Spleen (tissue), 13 donors: ENCODE measurements at regions of chr3 and their contacts with region 1.

Region 1: DNA sequence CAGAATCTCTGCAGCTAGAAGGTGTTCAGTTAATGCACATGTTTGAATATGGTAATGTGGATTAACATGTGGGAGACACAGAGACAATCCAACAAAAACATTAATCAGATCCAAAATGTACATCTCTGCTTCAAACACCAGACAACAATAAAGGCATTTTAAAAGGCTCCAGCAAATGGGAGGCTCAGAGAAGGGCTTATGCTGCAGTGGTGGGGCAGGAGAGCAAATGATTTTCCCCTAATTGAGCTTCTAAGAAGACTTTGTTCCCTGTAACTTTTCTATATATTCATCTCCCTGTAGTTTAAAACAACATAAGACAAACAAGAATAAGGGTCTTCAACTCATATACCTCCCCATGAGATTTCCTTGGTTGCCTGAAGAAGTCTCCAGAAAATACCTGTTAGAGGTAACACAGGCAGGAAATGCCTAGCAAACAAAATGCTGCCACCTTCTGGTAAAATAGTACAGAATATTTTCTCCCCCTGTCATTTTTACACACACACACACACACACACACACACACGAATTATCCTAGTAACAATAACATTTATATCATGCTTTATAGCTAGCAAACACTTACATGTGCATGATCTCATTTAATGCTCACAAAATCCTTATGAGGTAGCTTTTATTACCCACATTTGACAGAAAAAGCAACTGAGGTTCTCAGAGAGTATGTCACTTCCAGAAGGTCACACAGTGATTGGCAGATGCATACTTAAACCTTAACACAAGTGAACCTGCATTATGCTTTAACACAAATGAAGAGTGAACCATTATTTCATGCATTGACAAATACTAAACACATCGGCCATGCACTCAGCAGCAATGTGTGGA is 123.4 kb upstream of the MB21D2 start:
- DNase-seq: no peak
- H3K4me3 ChIP-seq: no peak overlapping the region
- H3K27ac ChIP-seq: no peak overlapping the region
- H3K4me1 ChIP-seq: no peaks in the 10 kb centered on the region
- H3K27me3 ChIP-seq: no peaks in the 10 kb centered on the region
- CTCF ChIP-seq: peak in 6 of 11 experiments; percentile 24 to 69 (median 40)
- POLR2A ChIP-seq: no peak

Region 2: GRCh38 chr3:192737506-192737905 is 303.5 kb before region 1 on chr3:
- intact Hi-C with region 1: no loop called
- DNase-seq: no peak
- H3K4me3 ChIP-seq: no peak overlapping the region
- H3K27ac ChIP-seq: no peak overlapping the region
- H3K4me1 ChIP-seq: no peaks in the 10 kb centered on the region
- H3K27me3 ChIP-seq: no peaks in the 10 kb centered on the region
- CTCF ChIP-seq: no peak
- POLR2A ChIP-seq: no peak

Region 3: GRCh38 chr3:192816351-192816750 is 224.7 kb before region 1 on chr3:
- intact Hi-C with region 1: loop called (anchors 2 kb)
- DNase-seq: no peak
- H3K4me3 ChIP-seq: no peak overlapping the region
- H3K27ac ChIP-seq: no peak overlapping the region
- H3K4me1 ChIP-seq: no peaks in the 10 kb centered on the region
- H3K27me3 ChIP-seq: no peaks in the 10 kb centered on the region
- CTCF ChIP-seq: peak in 9 of 11 experiments; percentile 18 to 65 (median 54)
- POLR2A ChIP-seq: no peak

Region 4: DNA sequence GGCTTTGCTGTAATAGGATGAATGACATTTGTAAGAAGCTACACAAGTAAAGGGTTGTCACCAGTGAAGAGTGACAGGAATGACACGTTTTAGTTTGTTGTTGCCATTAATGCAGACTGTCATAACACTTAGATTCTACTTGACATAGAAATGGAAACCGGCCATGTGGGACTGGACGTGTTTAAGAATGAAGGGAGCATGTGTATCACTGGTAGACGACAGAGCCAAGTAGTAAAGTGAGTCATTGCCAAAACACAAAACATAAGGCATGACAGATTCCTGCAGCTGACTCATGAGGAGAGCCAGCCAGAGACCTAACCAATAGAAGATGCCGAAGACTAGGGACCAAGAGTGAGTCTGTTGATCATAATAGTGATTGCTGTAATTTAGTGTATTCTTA is 93.8 kb after region 1 on chr3:
- intact Hi-C with region 1: no loop called
- DNase-seq: no peak
- H3K4me3 ChIP-seq: no peak overlapping the region
- H3K27ac ChIP-seq: no peak overlapping the region
- H3K4me1 ChIP-seq: no peaks in the 10 kb centered on the region
- H3K27me3 ChIP-seq: no peaks in the 10 kb centered on the region
- CTCF ChIP-seq: no peak
- POLR2A ChIP-seq: no peak

Region 5: DNA sequence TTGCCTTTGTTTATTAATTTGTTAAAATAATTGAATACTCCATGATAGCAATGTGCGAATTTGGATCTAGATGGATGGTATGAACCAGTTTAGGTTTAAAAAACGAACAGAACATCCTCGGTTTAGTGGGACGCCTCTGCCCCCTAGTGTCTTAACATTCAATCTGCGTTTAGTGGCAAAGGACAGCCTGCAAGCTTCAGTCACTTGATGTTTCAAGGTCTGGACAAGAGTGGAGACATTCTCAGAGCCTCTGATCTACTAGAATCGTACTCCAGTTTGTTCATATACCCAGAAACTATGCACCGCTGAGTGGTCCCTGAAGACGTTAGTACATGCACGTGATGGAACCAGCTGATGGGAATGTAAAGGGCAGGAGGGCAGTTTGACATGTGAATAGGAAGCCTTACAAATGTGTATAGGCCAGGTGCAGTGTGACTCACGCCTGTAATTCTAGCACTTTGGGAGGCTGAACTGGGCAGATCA is 531.4 kb after region 1 on chr3:
- intact Hi-C with region 1: loop called (anchors 10 kb)
- DNase-seq: no peak
- H3K4me3 ChIP-seq: no peak overlapping the region
- H3K27ac ChIP-seq: no peak overlapping the region
- H3K4me1 ChIP-seq: peaks cover 0 to 4% (median 0%) of the 10 kb centered on the region in 6 donors
- H3K27me3 ChIP-seq: no peaks in the 10 kb centered on the region
- CTCF ChIP-seq: peak in 10 of 11 experiments; percentile 20 to 82 (median 66)
- POLR2A ChIP-seq: no peak